CD4-positive, alpha-beta memory T cell (primary cell): ENCODE measurements at regions of chr17 and their contacts with region 1.

Region 1: DNA sequence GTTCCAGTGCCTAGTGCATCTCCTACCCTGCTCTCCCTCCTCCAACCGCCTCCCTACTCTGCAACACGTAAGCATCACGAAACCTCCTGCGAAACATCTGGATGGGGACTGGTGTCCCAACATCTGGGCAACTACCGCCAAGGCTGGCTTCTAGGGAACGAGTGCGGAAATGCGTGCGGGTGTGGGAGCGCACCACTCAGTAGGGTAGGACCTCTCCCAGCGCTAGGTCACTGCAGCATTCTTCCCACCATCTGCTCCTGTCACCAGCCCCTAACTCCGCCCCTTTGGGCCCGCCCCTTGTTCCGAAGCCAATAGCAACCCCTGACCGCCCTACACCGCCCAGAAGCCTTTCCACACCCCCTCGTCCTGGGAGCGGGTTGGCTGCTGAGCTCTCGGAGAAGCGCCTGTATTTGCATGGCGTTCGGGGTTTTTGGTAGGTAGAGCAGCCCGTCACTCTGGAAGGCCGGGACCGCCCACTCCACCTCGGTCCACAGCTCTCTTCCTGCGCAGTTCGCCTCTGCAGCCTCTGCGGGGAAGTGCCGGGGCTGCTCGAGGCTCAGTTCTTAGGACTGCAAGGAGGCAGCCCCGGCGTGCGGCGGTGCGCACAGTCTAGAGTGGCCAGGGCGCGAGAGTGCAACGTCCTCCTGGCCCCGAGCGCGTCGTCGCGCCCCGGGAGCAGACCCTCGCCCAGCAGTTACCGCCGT is at the start of gene HS3ST3B1:
- DNase-seq: peak; percentile 99 to 100 (median 99)
- H3K4me3 ChIP-seq: peak within 1 kb of the TSS; percentile 89 to 96
- H3K4me3 Mint-ChIP-seq: peak within 1 kb of the TSS; percentile 90 to 99 (median 98)
- H3K27ac ChIP-seq: peak within 1 kb of the TSS; percentile 61
- H3K27ac Mint-ChIP-seq: peak within 1 kb of the TSS; percentile 81 to 98 (median 93)
- H3K4me1 ChIP-seq: peaks cover 67% of the 10 kb centered on the region
- H3K4me1 Mint-ChIP-seq: peaks cover 45 to 80% (median 57%) of the 10 kb centered on the region in 4 donors
- H3K27me3 ChIP-seq: peaks cover 16% of the 10 kb centered on the region
- H3K27me3 Mint-ChIP-seq: peaks cover 16 to 29% of the 10 kb centered on the region in 2 donors
- total RNA-seq, gene HS3ST3B1: 38.8 to 40.5 TPM

Region 2: GRCh38 chr17:13031718-13032350 is 1268.9 kb before region 1 on chr17:
- CTCF ChIA-PET with region 1: interaction called, 3 read pairs
- POLR2A ChIA-PET with region 1: no interaction called
- intact Hi-C with region 1: loop called (anchors 5 kb)
- DNase-seq: peak in 4 of 5 donors; percentile 37 to 53 (median 49)
- H3K4me3 ChIP-seq: no peak overlapping the region
- H3K4me3 Mint-ChIP-seq: peak overlapping the region in 6 of 8 donors; percentile 27 to 73 (median 45)
- H3K27ac ChIP-seq: no peak overlapping the region
- H3K27ac Mint-ChIP-seq: peak overlapping the region in 6 of 7 donors; percentile 25 to 73 (median 55)
- H3K4me1 ChIP-seq: peaks cover 4% of the 10 kb centered on the region
- H3K4me1 Mint-ChIP-seq: peaks cover 12 to 17% (median 13%) of the 10 kb centered on the region in 4 donors
- H3K27me3 ChIP-seq: no peaks in the 10 kb centered on the region
- H3K27me3 Mint-ChIP-seq: peaks cover 3 to 7% of the 10 kb centered on the region in 2 donors

Region 3: DNA sequence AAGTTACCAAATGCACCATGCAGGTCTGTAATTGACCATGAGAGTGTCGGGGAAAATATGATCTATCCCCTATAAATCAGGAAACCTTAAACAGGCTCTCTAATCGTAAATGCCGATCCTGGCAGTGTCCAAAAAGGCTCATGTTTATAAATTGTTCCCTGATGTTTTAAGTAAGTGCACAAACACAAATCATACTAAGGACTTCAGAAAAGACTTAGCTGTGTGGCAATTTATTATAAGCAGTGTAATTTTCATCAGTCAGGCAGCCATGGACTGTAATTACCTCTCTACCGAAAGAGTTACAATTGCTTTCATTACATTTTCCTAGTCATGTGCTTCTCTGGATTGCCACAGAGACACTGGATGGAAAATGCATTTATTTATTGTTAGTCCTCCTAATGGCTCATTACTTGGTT is 304.9 kb before region 1 on chr17:
- CTCF ChIA-PET with region 1: no interaction called
- POLR2A ChIA-PET with region 1: no interaction called
- intact Hi-C with region 1: loop called (anchors 1 kb)
- DNase-seq: no peak
- H3K4me3 ChIP-seq: no peak overlapping the region
- H3K4me3 Mint-ChIP-seq: no peak overlapping the region
- H3K27ac ChIP-seq: no peak overlapping the region
- H3K27ac Mint-ChIP-seq: no peak overlapping the region
- H3K4me1 ChIP-seq: no peaks in the 10 kb centered on the region
- H3K4me1 Mint-ChIP-seq: peaks cover 0 to 2% (median 0%) of the 10 kb centered on the region in 4 donors
- H3K27me3 ChIP-seq: no peaks in the 10 kb centered on the region
- H3K27me3 Mint-ChIP-seq: no peaks in the 10 kb centered on the region

Region 4: DNA sequence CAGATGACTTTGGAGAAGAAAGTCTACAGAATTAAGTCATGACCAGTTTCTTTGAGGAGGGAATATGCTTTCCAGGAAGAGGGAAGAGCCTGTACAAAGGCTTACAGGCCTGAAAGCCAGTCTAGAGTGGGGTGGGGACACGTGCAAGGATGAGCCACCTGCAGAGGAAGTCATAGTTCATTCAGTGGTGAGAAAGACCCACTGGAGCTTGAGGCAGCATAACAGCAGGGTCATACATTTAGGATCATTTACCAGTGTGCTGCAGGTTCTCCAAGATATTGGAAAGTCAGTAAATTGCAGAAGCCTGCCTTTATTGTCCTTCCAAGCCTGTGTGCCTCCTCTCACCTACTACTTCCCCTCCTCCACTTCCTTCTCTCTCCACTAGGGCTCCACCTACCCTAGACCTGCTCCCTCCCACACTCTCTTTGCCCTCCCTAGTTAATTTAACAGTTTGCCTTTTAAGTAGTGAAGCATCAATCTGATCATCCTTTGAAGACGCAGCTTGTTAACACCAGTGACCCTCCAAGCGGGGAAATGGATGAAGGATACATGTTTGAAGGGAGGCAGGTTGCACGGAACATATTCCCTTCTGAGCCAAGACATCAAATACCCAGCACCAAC is 104.2 kb before region 1 on chr17:
- CTCF ChIA-PET with region 1: interaction called, 59 read pairs
- POLR2A ChIA-PET with region 1: interaction called, 144 read pairs
- intact Hi-C with region 1: loop called (anchors 1 kb)
- DNase-seq: peak in 3 of 5 donors; percentile 37 to 43 (median 42)
- H3K4me3 ChIP-seq: peak overlapping the region in 1 of 2 donors; percentile 32
- H3K4me3 Mint-ChIP-seq: peak overlapping the region; percentile 67 to 91 (median 78)
- H3K27ac ChIP-seq: peak overlapping the region; percentile 35
- H3K27ac Mint-ChIP-seq: peak overlapping the region; percentile 87 to 96 (median 92)
- H3K4me1 ChIP-seq: peaks cover 90% of the 10 kb centered on the region
- H3K4me1 Mint-ChIP-seq: peaks cover 74 to 95% (median 83%) of the 10 kb centered on the region in 4 donors
- H3K27me3 ChIP-seq: no peaks in the 10 kb centered on the region
- H3K27me3 Mint-ChIP-seq: no peaks in the 10 kb centered on the region

Region 5: DNA sequence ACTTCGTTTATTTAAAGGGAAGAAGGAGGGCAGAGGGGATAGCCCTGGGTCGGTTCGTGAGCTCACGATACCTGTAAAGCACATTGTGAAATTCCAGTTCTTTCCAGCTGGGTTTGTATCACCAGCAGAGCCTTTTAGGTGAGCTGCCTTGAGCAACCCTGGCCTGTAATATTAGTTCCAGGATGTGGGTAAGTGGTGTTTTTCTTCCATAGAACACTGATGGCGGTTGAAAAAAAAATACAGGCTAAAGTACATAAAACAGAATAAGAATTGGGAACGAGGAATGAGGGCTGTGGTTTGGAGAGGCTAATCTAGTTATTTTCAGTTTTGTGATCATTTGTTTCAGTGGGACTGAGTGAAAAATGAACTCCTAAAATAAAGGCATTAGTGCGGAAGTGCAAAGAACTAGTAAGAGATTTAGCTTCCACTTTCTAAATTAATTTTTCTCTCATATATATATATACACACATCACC is 20.8 kb after region 1 on chr17:
- CTCF ChIA-PET with region 1: interaction called, 21 read pairs
- POLR2A ChIA-PET with region 1: interaction called, 21 read pairs
- intact Hi-C with region 1: no loop called
- DNase-seq: no peak
- H3K4me3 ChIP-seq: peak overlapping the region in 1 of 2 donors; percentile 9
- H3K4me3 Mint-ChIP-seq: peak overlapping the region in 7 of 8 donors; percentile 30 to 72 (median 66)
- H3K27ac ChIP-seq: no peak overlapping the region
- H3K27ac Mint-ChIP-seq: peak overlapping the region; percentile 24 to 87 (median 73)
- H3K4me1 ChIP-seq: peaks cover 73% of the 10 kb centered on the region
- H3K4me1 Mint-ChIP-seq: peaks cover 67 to 100% (median 87%) of the 10 kb centered on the region in 4 donors
- H3K27me3 ChIP-seq: no peaks in the 10 kb centered on the region
- H3K27me3 Mint-ChIP-seq: no peaks in the 10 kb centered on the region

Region 6: GRCh38 chr17:14553855-14554254 is 253.1 kb after region 1 on chr17:
- CTCF ChIA-PET with region 1: interaction called, 18 read pairs
- POLR2A ChIA-PET with region 1: interaction called, 9 read pairs
- intact Hi-C with region 1: loop called (anchors 5 kb)
- DNase-seq: no peak
- H3K4me3 ChIP-seq: no peak overlapping the region
- H3K4me3 Mint-ChIP-seq: no peak overlapping the region
- H3K27ac ChIP-seq: no peak overlapping the region
- H3K27ac Mint-ChIP-seq: no peak overlapping the region
- H3K4me1 ChIP-seq: no peaks in the 10 kb centered on the region
- H3K4me1 Mint-ChIP-seq: peaks cover 0 to 8% (median 1%) of the 10 kb centered on the region in 4 donors
- H3K27me3 ChIP-seq: no peaks in the 10 kb centered on the region
- H3K27me3 Mint-ChIP-seq: peaks cover 0 to 1% of the 10 kb centered on the region in 2 donors